Activated B cell treated with CpG ODN at 0.5 μM for 24 hours (primary cell): ENCODE measurements at regions of chr3 and their contacts with region 1.

Region 1: DNA sequence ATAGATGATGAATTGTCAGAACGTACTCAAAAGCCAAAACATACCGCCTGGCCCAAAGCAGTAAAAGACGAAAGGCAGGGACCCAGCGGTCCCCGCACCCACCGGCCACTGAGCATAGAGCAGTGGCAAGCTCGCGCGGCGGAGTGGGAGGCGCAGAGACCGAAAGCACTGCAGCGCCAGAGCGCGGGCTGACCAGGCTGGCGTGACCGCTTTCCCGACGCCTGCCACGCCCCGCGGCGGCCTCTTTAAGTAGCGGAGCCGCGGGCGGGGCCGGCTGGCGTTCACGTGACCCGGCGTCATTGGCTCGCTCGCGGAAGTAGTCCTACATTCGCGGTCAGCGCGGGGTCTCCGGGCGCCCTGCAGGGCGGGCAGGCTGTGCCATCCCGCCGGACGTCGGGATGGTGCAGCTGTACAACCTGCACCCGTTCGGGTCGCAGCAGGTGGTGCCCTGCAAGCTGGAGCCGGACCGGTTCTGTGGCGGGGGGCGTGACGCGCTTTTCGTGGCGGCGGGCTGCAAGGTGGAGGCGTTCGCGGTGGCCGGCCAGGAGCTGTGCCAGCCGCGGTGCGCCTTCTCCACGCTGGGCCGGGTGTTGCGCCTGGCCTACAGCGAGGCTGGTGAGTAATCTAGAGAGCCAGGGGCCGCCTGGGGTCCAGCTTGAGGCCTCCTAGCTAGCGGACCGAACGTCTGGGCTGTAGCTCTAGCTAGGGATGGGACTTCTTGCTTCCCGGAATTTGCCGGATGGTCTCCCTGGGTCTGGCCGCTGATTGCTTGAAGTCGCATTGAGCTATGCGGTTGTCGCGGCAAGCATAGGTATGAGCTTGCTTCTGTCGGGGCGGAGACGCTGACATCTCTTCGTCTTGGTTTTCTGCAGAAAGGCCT is at the start of gene HPS3:
- DNase-seq: peak; percentile 90
- ATAC-seq: peak; percentile 95
- H3K4me3 Mint-ChIP-seq: peak within 1 kb of the TSS; percentile 98
- H3K27ac Mint-ChIP-seq: peak within 1 kb of the TSS; percentile 89
- H3K4me1 Mint-ChIP-seq: peaks cover 48% of the 10 kb centered on the region
- H3K27me3 Mint-ChIP-seq: no peaks in the 10 kb centered on the region
- CTCF ChIP-seq: no peak
- total RNA-seq, gene HPS3: 30.1 and 30.5 TPM in 2 replicates

Region 2: DNA sequence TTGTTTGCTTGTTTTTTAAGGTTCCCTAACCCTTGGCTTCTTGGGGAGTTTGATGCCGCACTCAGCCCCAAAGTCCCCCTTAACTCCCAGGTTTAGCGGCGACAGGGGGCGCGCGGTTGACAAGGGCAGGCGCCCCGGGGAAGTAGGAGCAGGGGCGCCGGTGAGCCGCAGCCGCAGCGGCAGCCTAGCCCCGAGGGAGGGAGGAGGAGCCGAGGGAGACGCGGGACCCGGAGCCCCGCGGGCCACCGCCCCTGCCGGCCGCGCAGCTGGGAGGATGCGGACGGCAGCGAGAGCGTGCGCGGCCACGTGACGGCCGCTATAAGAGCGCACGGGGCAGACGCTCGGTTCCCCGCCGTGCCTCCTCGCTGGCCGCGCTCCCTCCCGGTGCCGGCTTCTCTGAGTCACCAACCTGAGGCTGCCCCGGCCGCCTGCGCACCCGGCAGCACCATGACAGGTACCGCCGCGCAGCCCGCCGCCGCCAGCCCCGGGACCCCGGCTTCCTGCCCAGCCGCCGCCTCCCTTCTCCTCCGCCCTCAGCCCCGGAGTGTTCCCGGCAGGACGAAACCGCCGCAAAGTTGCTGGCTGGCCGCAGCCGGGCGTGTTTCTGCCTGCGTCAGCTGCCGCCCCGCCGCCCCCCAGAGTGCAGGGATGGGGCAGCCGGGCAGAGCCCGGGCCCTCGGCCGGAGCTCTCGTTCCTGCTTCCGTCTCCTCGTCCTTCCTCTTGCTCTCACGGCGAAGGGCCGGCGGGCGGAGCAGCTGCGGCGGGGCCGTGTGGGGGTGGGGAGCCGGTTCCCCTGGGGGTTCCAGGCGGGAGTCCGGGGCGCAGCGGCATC is 138.2 kb before region 1 on chr3 and contains the start of gene GYG1:
- CTCF ChIA-PET with region 1: no interaction called
- POLR2A ChIA-PET with region 1: interaction called, 8 read pairs
- intact Hi-C with region 1: loop called (anchors 1 kb)
- DNase-seq: peak; percentile 72
- ATAC-seq: peak; percentile 91
- H3K4me3 Mint-ChIP-seq: peak within 1 kb of the TSS; percentile 84
- H3K27ac Mint-ChIP-seq: peak within 1 kb of the TSS; percentile 69
- H3K4me1 Mint-ChIP-seq: peaks cover 21% of the 10 kb centered on the region
- H3K27me3 Mint-ChIP-seq: no peaks in the 10 kb centered on the region
- CTCF ChIP-seq: no peak
- total RNA-seq, gene GYG1: 20.2 and 21.8 TPM in 2 replicates

Region 3: DNA sequence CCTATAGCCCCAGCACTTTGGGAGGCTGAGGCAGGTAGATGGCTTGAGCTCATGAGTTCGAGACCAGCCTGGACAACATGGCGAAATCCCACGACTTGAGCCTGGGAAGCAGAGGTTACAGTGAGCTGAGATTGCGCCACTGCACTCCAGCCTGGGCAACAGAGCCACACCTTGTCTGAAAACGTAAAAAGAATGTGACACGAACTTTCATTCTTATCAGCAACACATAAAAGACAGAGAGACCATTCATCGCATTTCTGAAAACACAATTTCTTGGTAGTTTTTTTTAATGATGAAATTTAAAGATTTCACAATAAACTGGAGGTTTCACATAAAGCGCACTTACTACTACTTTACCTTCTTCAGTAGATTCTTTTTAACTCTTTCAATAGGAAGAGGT is 61.7 kb before region 1 on chr3:
- CTCF ChIA-PET with region 1: no interaction called
- POLR2A ChIA-PET with region 1: no interaction called
- intact Hi-C with region 1: no loop called
- DNase-seq: no peak
- ATAC-seq: no peak
- H3K4me3 Mint-ChIP-seq: no peak overlapping the region
- H3K27ac Mint-ChIP-seq: no peak overlapping the region
- H3K4me1 Mint-ChIP-seq: peaks cover 4% of the 10 kb centered on the region
- H3K27me3 Mint-ChIP-seq: no peaks in the 10 kb centered on the region
- CTCF ChIP-seq: no peak

Region 4: DNA sequence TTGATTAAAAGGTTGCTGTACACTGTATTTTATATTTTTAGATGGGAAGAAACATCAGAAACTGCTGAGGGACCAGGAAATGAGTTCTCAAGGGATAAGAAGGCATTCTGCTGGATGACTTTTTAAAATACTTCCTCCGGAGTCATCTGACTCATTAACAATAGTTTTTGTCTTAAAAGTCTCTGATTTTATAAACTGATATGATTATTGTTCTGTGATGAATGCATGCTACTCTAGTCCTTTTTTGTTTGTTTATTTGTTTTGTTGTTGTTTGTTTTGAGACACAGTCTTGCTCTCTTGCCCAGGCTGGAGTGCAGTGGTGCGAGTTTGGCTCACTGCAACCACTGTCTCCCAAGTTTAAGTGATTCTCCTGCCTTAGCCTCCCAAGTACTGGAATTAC is 25.1 kb before region 1 on chr3:
- CTCF ChIA-PET with region 1: no interaction called
- POLR2A ChIA-PET with region 1: no interaction called
- intact Hi-C with region 1: no loop called
- DNase-seq: no peak
- ATAC-seq: no peak
- H3K4me3 Mint-ChIP-seq: no peak overlapping the region
- H3K27ac Mint-ChIP-seq: no peak overlapping the region
- H3K4me1 Mint-ChIP-seq: no peaks in the 10 kb centered on the region
- H3K27me3 Mint-ChIP-seq: peaks cover 2% of the 10 kb centered on the region
- CTCF ChIP-seq: no peak

Region 5: GRCh38 chr3:149145974-149146373 is 16.4 kb after region 1 on chr3:
- CTCF ChIA-PET with region 1: interaction called, 7 read pairs
- POLR2A ChIA-PET with region 1: interaction called, 45 read pairs
- intact Hi-C with region 1: loop called (anchors 1 kb)
- DNase-seq: no peak
- ATAC-seq: peak; percentile 87
- H3K4me3 Mint-ChIP-seq: no peak overlapping the region
- H3K27ac Mint-ChIP-seq: no peak overlapping the region
- H3K4me1 Mint-ChIP-seq: peaks cover 32% of the 10 kb centered on the region
- H3K27me3 Mint-ChIP-seq: no peaks in the 10 kb centered on the region
- CTCF ChIP-seq: no peak

Region 6: DNA sequence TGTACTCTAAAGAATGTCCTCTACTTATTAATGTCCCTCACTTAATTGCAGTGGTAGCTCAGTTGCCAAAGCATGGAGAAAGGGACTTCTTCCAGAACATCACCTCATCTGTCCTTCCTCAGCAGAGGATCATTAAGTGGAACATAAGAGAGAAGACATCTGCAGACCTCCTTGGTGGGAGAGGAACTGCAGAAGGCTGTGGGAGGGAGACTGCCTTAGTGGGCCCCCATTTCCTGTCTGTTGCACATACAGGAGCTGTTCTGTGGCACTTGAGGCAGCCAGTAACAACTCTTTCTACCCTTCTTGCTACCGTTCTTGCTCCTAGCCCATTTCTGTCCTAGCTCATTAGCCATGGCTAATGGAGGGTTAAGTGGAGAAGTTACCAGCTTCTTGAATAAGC is 33.5 kb after region 1 on chr3:
- CTCF ChIA-PET with region 1: no interaction called
- POLR2A ChIA-PET with region 1: interaction called, 3 read pairs
- intact Hi-C with region 1: loop called (anchors 5 kb)
- DNase-seq: no peak
- ATAC-seq: no peak
- H3K4me3 Mint-ChIP-seq: no peak overlapping the region
- H3K27ac Mint-ChIP-seq: no peak overlapping the region
- H3K4me1 Mint-ChIP-seq: peaks cover 7% of the 10 kb centered on the region
- H3K27me3 Mint-ChIP-seq: no peaks in the 10 kb centered on the region
- CTCF ChIP-seq: no peak

Region 7: GRCh38 chr3:149273096-149273751 is 143.7 kb after region 1 on chr3:
- CTCF ChIA-PET with region 1: interaction called, 7 read pairs
- POLR2A ChIA-PET with region 1: interaction called, 7 read pairs
- intact Hi-C with region 1: loop called (anchors 2 kb)
- DNase-seq: no peak
- ATAC-seq: peak; percentile 88
- H3K4me3 Mint-ChIP-seq: no peak overlapping the region
- H3K27ac Mint-ChIP-seq: no peak overlapping the region
- H3K4me1 Mint-ChIP-seq: peaks cover 19% of the 10 kb centered on the region
- H3K27me3 Mint-ChIP-seq: no peaks in the 10 kb centered on the region
- CTCF ChIP-seq: peak; percentile 92

Region 8: DNA sequence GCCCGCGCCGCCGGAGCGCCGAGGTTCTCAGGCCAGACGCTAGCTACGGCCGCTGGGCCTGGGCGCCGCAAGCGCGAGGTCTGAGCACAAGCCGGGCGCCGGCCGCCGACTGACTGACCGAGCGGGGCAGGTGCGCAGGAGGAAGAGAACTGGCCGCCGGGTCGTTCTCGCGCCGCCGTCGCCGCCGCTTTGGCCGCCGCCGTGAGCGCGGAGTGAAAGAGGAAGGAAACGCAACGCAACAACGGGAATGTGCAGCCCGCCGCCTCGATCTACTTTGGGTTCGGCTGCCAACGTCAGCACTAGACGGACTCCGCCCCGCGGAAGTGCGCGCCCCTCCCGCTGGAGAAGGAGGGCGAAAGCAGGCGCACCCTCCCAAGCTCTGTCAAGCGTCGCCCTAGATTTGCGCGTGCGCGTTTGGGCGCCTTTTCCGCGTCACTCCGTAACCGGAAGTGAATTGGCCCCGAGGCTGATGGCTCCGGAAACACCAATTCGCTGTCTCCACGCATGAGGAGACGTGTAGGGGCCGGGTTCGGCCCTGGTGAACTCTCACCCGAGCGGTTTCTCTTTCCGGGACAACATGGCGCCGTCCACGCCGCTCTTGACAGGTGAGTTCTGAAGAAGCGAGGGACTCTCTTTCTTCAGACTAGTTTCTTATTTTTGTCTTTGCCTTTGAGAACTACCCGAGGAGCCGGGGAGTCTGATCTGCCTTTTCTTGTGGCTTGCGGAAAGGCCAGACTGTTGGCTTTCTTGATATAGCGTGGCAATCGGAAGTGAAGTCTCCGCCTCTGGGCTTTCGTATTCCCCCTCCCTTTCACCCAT is 1416.9 kb after region 1 on chr3 and contains the starts of genes EIF2A and SERP1:
- CTCF ChIA-PET with region 1: no interaction called
- POLR2A ChIA-PET with region 1: no interaction called
- intact Hi-C with region 1: loop called (anchors 1 kb)
- DNase-seq: peak; percentile 98
- ATAC-seq: peak; percentile 92
- H3K4me3 Mint-ChIP-seq: peak within 1 kb of the TSS; percentile 96
- H3K27ac Mint-ChIP-seq: peak within 1 kb of the TSS; percentile 99
- H3K4me1 Mint-ChIP-seq: peaks cover 50% of the 10 kb centered on the region
- H3K27me3 Mint-ChIP-seq: no peaks in the 10 kb centered on the region
- CTCF ChIP-seq: no peak
- total RNA-seq, gene EIF2A: 105 and 109 TPM in 2 replicates
- total RNA-seq, gene SERP1: 87.2 and 88.2 TPM in 2 replicates